Activated CD8-positive, alpha-beta T cell treated with anti-CD3 and anti-CD28 coated beads for 36 hours (primary cell): ENCODE measurements at regions of chr19 and their contacts with region 1.

Region 1: GRCh38 chr19:11881151-11881800 is 6.3 kb upstream of the ZNF69 start:
- DNase-seq: peak; percentile 76
- ATAC-seq: peak; percentile 81
- H3K4me3 Mint-ChIP-seq: no peak overlapping the region
- H3K27ac Mint-ChIP-seq: no peak overlapping the region
- H3K4me1 Mint-ChIP-seq: peaks cover 2% of the 10 kb centered on the region
- H3K27me3 Mint-ChIP-seq: peaks cover 1% of the 10 kb centered on the region
- CTCF ChIP-seq: peak; percentile 68

Region 2: GRCh38 chr19:11868188-11868587 is 13.1 kb before region 1 on chr19:
- CTCF ChIA-PET with region 1: interaction called, 13 read pairs
- POLR2A ChIA-PET with region 1: no interaction called
- intact Hi-C with region 1: no loop called
- DNase-seq: no peak
- ATAC-seq: no peak
- H3K4me3 Mint-ChIP-seq: no peak overlapping the region
- H3K27ac Mint-ChIP-seq: no peak overlapping the region
- H3K4me1 Mint-ChIP-seq: no peaks in the 10 kb centered on the region
- H3K27me3 Mint-ChIP-seq: no peaks in the 10 kb centered on the region
- CTCF ChIP-seq: no peak

Region 3: DNA sequence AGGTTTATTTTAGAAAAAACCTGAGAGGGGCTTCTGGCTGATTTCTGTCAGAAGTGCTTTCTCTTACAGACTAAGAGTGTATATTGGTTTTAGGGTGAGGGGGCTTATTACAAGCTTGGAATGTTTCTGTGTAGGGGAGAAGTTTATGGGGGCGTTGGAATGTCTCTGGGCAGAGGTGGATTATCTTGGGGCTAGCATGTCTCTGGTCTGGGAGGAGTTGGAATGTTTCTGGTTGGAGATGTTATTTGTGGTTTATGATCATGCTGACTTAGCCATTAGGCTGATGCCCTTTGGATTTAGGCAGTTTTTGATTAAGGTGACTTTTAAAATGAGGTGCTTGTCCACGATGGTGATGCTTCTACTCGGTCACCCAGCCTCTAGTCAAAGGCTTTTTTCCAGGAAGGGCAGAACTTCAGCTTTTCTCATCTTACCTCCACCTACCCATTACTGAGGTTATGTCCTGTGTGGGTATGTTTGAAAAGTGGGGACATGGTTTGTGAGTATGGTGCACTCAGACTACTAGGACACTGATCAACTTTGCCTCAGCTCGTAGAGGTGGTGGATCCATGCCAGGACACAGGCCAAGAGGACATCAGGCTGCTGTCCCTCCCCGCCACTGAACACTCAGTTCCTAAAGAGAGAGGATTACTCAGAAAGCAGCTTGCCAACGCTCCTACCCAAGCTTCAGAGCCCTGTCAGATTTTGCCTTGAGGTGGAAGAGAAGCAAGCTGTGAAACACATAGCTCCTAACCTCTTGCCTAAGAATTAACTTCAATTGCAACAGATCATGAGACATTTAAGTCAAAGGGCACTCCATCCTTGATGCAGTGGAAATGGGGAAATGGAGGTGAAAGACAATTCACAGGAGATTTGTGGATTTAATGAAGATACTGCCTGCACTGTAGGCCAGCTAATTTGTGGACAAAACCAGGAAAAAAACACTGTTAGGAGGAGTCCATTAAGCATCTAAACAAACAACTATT is 349.8 kb after region 1 on chr19:
- CTCF ChIA-PET with region 1: no interaction called
- POLR2A ChIA-PET with region 1: no interaction called
- intact Hi-C with region 1: no loop called
- DNase-seq: no peak
- ATAC-seq: no peak
- H3K4me3 Mint-ChIP-seq: no peak overlapping the region
- H3K27ac Mint-ChIP-seq: no peak overlapping the region
- H3K4me1 Mint-ChIP-seq: no peaks in the 10 kb centered on the region
- H3K27me3 Mint-ChIP-seq: no peaks in the 10 kb centered on the region
- CTCF ChIP-seq: no peak